ENCODE measurements at regions of chr12 and their contacts with region 1.

Region 1: DNA sequence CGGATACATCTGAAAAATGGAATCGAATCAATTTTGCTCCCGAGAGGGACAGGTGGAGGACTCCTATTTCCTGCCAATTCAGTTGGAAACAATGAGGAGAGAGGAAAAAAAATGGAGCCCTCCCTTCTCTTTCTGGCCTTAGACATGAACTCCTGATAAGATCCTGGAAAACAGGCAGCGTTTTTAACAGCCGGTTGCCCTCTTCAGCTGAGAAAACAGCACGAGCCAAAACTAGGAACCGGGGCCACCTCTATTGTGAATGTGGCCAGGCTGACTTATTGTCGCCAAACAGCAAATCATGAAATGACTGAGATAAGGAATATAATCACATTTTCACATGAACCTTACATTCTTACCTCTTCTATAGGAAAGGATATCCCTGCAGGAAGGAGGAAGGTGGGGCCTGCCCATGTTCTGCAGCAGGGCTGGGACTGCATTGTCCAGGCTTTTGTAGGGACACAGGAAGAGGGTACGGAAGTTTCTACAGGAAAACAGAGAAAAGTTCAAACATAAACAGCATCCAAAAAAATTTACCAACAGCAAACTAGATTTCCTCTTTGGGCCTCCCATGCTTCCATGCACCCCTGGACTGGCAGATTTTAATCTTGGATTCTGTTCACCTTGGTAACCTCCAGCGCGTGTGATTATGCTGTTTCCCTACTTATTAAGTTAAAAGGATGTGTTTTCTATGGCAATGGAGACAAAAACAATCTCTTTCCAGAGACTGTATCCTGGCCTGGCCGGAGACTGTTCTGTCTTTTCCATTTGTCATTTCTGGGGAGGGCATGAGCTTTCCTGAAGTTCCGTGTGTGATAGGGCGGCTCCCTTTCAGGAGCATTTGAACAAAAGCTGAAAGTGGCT is 29.0 kb upstream of the ELK3 start:
- DNase-seq: no peak
- ATAC-seq: peak; percentile 55

Region 2: GRCh38 chr12:96078231-96079135 is 86.7 kb before region 1 on chr12:
- intact Hi-C with region 1: loop called (anchors 1 kb)
- DNase-seq: peak; percentile 79
- ATAC-seq: peak; percentile 67

Region 3: GRCh38 chr12:96141216-96141912 is 23.8 kb before region 1 on chr12:
- intact Hi-C with region 1: no loop called
- DNase-seq: no peak
- ATAC-seq: no peak

Region 4: DNA sequence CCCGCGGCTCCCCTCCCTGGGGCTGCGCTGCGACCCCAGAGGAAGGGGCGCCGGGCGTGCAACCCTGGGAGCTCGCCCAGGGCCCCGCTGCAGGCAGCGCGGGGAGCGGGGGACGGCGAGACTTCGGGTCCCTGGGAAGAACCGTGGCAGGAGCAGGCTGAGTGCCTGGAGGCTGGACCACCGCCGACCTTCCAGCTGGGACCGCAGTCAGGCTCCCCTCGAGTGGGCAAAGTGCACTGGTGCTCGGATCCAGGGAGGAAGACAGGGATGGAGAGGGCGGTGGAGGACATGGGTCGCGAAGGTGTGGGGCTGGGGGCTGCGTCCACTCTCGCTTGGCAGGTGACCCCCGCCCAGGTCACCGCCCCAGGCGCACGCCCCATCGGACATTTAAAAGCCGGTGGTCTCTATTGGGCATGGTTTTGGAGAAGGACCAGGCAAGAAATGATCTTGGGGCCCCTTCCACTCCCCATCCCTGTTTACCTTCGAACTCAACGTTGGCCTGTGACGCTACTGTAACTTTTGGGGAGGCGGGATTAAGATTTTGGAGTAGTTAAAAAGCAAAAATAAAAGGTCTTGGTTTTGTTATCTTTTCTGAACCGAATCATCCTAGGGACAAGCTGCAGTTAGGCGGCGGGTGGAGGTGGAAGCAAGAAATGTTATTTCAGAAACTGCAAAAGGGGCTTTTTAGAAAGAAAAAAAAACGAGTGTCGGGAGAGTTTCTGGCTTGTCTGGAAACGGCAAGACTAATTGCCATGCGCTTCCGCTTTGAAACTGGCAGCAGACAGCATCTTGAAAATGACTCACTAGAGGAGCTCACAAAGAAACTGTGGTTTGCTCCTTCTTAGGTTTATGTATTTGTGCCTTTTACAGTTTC is 30.0 kb after region 1 on chr12:
- intact Hi-C with region 1: loop called (anchors 2 kb)
- DNase-seq: peak; percentile 71
- ATAC-seq: peak; percentile 53

Region 5: GRCh38 chr12:96211988-96212387 is 46.8 kb after region 1 on chr12:
- intact Hi-C with region 1: loop called (anchors 2 kb)
- DNase-seq: no peak
- ATAC-seq: no peak

Measured in Right ventricle myocardium inferior (tissue), 1 donor.